Astrocyte of the cerebellum (primary cell): ENCODE measurements at regions of chr9 and their contacts with region 1.

Region 1: DNA sequence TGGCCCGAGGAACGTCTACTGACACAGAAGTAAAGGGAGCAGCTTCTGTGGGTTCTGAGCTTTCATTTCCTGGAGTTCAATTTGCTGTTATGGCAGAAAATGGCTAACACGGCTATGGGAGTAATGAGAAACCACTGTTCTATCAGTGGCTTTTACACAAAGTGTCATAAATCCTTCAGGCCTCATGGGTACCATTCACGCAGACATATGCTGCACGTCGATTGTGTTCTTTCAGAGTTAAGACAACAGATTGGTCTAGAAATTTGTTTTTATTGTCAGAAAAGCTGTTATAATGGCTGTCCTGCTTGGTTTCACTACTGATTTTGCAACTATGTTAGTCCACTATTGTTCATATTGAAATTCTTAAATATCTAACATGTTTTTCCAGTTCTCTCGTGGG is 135.4 kb downstream of the ALDH1A1 start:
- DNase-seq: no peak
- H3K4me3 ChIP-seq: no peak overlapping the region
- CTCF ChIP-seq: no peak

Region 2: DNA sequence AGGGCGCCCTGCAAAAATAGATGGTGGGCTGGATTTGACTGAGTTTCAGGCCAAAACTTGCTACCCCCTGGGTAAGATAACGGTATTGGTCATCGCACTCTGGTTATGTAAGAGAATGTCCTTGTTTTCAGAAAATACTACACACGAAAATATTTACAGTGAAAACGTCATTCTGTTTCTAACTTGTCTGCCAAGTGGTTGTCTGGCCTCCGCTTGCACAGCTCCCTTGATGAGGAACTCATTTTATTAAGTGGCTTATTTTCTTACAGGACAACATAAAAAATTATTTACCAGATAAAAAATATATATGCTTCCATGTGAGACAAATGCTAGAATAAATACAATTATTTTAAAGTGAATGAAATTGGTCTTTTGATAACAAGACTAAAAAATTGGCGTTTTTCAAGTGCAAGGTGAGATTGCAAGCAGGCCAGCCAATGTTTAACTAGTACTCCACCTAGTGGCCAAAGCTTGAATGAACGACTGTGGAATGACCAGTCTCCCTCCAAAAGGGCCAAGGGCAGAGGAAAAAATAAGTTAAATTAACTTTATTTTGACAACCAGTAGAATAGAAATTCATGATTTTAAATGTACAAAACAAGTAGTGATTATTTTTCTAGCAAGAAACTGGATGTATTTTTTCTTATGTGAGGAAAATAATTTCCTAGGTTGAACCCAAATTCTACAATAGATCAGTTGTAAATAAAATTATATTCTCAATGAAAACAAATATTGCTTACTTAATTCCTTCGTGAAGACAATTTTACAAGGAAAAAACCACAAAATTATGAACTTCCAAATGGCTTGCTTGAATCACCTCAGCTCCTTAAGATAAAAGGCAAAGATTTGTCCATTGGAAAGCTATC is 545.6 kb before region 1 on chr9:
- in situ Hi-C with region 1: loop called (anchors 5 kb)
- DNase-seq: peak; percentile 33
- H3K4me3 ChIP-seq: no peak overlapping the region
- CTCF ChIP-seq: peak; percentile 89

Region 3: GRCh38 chr9:72755836-72756235 is 61.6 kb before region 1 on chr9:
- in situ Hi-C with region 1: loop called (anchors 5 kb)
- DNase-seq: no peak
- H3K4me3 ChIP-seq: no peak overlapping the region
- CTCF ChIP-seq: no peak